ENCODE measurements at regions of chr19 and their contacts with region 1.

Region 1: GRCh38 chr19:38039966-38040365 is 133.0 kb downstream of the SIPA1L3 start:
- DNase-seq: peak; percentile 30
- H3K4me3 ChIP-seq: no peak overlapping the region
- H3K27ac ChIP-seq: peak overlapping the region; percentile 30
- H3K4me1 ChIP-seq: peaks cover 3% of the 10 kb centered on the region
- H3K27me3 ChIP-seq: no peaks in the 10 kb centered on the region
- CTCF ChIP-seq: no peak
- POLR2A ChIP-seq: no peak

Region 2: DNA sequence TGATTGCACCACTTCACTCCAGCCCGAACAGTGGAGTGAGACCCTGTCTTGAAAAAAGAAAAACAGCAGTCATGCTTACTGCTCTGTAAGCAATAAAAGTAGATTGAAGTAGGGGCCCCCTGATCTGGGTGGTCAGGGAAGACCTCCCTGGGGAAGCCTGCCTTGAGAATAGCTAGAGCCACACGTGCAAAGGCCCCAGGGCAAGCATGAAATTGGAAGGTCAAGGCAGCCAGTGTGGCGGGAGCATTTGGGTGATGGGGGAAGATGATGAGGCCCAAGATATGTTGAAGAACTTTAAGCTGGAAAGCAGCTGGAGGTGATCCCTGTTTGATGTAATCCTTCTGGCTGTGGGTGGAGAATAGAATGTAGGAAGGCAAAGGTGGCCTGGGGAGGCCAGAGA is 28.5 kb before region 1 on chr19:
- CTCF ChIA-PET with region 1: no interaction called
- POLR2A ChIA-PET with region 1: no interaction called
- dilution Hi-C with region 1: no loop called
- intact Hi-C with region 1: no loop called
- DNase-seq: no peak
- H3K4me3 ChIP-seq: no peak overlapping the region
- H3K27ac ChIP-seq: no peak overlapping the region
- H3K4me1 ChIP-seq: no peaks in the 10 kb centered on the region
- H3K27me3 ChIP-seq: no peaks in the 10 kb centered on the region
- CTCF ChIP-seq: no peak
- POLR2A ChIP-seq: no peak

Region 3: GRCh38 chr19:38022791-38023670 is 16.9 kb before region 1 on chr19:
- CTCF ChIA-PET with region 1: interaction called, 7 read pairs
- POLR2A ChIA-PET with region 1: interaction called, 5 read pairs
- dilution Hi-C with region 1: no loop called
- intact Hi-C with region 1: loop called (anchors 2 kb)
- DNase-seq: peak; percentile 80
- H3K4me3 ChIP-seq: no peak overlapping the region
- H3K27ac ChIP-seq: peak overlapping the region; percentile 92
- H3K4me1 ChIP-seq: peaks cover 52% of the 10 kb centered on the region
- H3K27me3 ChIP-seq: no peaks in the 10 kb centered on the region
- CTCF ChIP-seq: no peak
- POLR2A ChIP-seq: no peak